ENCODE measurements at regions of chr11 and their contacts with region 1.

Region 1: DNA sequence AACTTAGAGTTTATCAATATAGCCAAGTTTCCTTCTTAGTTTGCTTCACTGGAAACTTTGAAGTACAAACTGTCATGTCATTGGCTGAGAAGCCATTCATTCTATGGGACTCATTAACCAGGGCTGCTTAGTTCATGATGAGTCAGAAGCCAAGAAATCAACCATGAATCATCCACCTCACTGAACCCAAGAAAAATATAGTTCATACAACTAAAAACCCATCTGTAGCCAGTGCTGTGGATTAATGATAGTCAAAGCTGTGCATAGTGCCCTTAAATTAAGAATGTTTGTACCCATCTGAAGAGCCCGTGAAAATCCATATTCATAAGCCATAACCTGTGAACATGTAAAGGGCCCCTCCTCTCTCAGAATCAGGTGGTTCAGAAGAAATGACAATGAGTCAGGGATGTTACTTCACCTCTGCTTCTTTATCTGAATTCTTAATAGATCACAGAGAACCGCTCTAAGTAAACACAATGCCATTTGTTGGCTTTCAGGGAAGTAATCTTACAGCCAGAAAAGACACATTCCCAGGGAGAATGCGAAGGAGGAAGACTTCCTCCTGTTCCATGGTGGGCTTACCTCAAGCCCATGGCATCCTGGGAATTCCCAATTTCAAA is 25.4 kb downstream of the MMP20 start:
- DNase-seq: peak; percentile 44 to 100
- H3K4me3 ChIP-seq: peak overlapping the region; percentile 10; the same call in 1 of the 2 replicates
- H3K27ac ChIP-seq: peak overlapping the region; percentile 97
- H3K4me1 ChIP-seq: peaks cover 43% of the 10 kb centered on the region
- H3K27me3 ChIP-seq: no peaks in the 10 kb centered on the region
- CTCF ChIP-seq: no peak

Region 2: DNA sequence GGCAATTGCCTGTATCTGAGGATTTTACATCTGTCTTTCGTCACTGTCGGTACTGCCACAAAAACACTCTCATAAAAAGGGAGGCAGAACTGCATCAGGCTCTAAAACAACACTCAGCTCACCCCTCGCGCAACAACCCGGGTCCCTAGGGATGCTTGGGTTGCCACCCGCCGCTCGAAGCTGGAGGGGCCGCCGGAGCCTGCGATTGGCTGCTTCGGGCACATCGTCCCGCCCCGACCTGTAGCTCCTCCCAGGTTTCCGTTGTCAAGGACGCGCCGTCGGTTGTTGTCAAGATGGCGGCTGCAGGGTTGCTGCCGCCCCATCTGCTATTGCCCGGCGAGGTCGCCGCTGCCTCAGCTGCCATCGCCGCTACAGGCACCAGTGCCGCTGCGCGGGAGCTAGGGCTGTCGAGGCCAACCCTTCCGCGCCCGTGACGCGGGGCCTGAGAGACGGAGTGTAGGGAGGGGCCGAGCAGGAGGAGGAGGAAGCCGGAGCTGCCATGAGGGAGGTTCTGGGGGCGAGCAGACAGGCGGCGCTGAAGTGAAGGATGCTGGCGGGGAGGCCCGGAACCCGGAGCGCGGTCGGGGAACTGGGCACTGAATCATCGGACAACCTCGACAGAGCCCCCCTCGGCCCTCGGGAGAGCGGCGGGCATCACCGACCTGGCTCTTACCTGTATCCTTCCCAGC is 684.9 kb before region 1 on chr11 and contains the start of gene CEP126:
- CTCF ChIA-PET with region 1: no interaction called
- POLR2A ChIA-PET with region 1: interaction called, 17 read pairs
- intact Hi-C with region 1: no loop called
- DNase-seq: peak; percentile 84 to 91
- H3K4me3 ChIP-seq: peak within 1 kb of the TSS; percentile 69
- H3K27ac ChIP-seq: peak within 1 kb of the TSS; percentile 65
- H3K4me1 ChIP-seq: peaks cover 28% of the 10 kb centered on the region
- H3K27me3 ChIP-seq: no peaks in the 10 kb centered on the region
- CTCF ChIP-seq: peak; percentile 57; the same call in 1 of the 2 replicates
- total RNA-seq, gene CEP126: 3.7 and 6.0 TPM in 2 replicates

Region 3: DNA sequence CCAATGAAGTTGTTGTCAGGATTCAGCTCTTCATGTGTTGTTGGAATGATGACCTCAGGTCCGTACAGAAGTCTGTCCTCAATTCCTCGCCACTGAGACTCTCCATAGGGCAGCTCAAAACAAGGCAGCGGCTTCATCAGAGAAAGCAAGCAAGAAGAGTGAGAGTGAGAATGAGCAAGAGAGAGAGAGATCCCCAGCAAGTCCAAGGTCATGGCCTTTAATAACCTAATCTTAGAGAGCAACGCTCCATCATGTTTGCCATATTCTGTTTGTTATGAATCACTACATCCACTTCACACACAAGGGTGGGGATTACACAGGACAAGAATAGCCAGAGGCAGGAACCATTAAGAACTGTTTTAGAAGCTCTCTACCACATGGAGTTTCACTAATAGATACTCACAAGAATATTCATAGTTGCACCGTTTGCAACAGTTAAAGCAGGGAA is 45.9 kb before region 1 on chr11:
- CTCF ChIA-PET with region 1: no interaction called
- POLR2A ChIA-PET with region 1: no interaction called
- intact Hi-C with region 1: loop called (anchors 1 kb)
- DNase-seq: peak in 1 of 2 experiments; percentile 83
- H3K4me3 ChIP-seq: no peak overlapping the region; the same call in 1 of the 2 replicates
- H3K27ac ChIP-seq: peak overlapping the region; percentile 95
- H3K4me1 ChIP-seq: peaks cover 53% of the 10 kb centered on the region
- H3K27me3 ChIP-seq: no peaks in the 10 kb centered on the region
- CTCF ChIP-seq: no peak

Region 4: DNA sequence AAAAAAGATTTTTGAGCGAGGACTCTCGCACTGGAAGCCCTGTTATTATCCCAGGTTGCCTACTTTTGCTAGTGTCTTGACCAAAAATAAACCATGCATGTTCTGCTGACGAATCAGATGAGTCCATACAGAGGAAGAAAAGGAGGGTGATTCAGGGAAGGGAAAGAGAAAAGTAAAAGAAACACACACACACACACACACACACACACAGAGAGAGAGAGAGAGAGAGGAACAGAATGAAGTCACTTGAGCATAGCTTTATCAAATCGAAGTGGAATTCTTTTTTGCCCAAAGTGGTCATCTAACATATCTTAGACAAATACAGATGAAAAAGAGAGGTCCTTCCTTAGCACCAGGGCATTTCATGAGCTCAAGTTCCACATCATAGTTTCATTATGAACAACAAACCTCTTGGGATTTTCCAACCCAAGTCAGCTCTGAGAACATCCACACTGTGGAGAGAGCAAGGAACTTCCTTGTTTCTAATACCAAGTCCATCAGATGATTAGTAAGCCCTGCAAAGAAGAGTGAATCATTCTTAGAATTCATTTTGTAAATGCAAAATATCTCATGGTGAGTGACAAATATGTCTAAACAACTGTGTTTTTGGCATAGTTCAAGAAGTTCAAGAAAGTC is 282.8 kb after region 1 on chr11:
- CTCF ChIA-PET with region 1: interaction called, 13 read pairs
- POLR2A ChIA-PET with region 1: no interaction called
- intact Hi-C with region 1: no loop called
- DNase-seq: no peak
- H3K4me3 ChIP-seq: no peak overlapping the region
- H3K27ac ChIP-seq: no peak overlapping the region
- H3K4me1 ChIP-seq: no peaks in the 10 kb centered on the region
- H3K27me3 ChIP-seq: no peaks in the 10 kb centered on the region
- CTCF ChIP-seq: no peak

Region 5: DNA sequence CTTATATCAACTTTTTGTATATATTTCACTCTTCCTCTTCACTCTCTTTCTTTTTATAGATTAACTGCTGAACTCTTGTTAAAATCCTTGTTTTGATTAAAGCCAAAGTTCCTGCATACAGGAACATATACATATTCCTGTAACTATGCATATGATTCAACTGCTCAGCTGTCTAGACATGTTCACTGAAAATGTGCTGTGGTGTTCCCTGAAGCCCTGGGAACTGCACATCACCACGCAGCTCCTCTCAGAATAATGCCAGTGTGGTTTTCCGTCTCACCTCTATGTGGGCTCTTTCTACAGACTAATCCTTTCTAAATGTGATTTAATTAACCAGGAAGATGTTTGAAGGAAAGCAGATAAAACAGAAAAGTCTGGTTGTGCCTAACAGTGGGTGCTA is 300.6 kb after region 1 on chr11:
- CTCF ChIA-PET with region 1: no interaction called
- POLR2A ChIA-PET with region 1: no interaction called
- intact Hi-C with region 1: no loop called
- DNase-seq: no peak
- H3K4me3 ChIP-seq: no peak overlapping the region
- H3K27ac ChIP-seq: no peak overlapping the region
- H3K4me1 ChIP-seq: peaks cover under 1% of the 10 kb centered on the region; the same call in 1 of the 2 replicates
- H3K27me3 ChIP-seq: no peaks in the 10 kb centered on the region
- CTCF ChIP-seq: no peak